Left ventricle myocardium inferior (tissue), 1 donor: ENCODE measurements at regions of chr6 and their contacts with region 1.

Region 1: GRCh38 chr6:150016324-150017185 is 8.8 kb downstream of the RAET1L start:
- DNase-seq: no peak
- H3K4me3 ChIP-seq: no peak overlapping the region
- H3K27ac ChIP-seq: no peak overlapping the region
- H3K4me1 ChIP-seq: peaks cover 3% of the 10 kb centered on the region
- H3K27me3 ChIP-seq: peaks cover 81% of the 10 kb centered on the region
- CTCF ChIP-seq: peak; percentile 80

Region 2: GRCh38 chr6:149934249-149935156 is 82.1 kb before region 1 on chr6:
- intact Hi-C with region 1: loop called (anchors 2 kb)
- DNase-seq: no peak
- H3K4me3 ChIP-seq: no peak overlapping the region
- H3K27ac ChIP-seq: no peak overlapping the region
- H3K4me1 ChIP-seq: peaks cover 12% of the 10 kb centered on the region
- H3K27me3 ChIP-seq: peaks cover 98% of the 10 kb centered on the region
- CTCF ChIP-seq: peak; percentile 86